ENCODE measurements at regions of chr15 and their contacts with region 1.

Region 1: GRCh38 chr15:60916679-60917460 is 312.2 kb downstream of the RORA start:
- DNase-seq: peak; percentile 89 to 97 (median 94)
- H3K4me3 ChIP-seq: peak overlapping the region in 1 of 4 donors; percentile 27
- H3K27ac ChIP-seq: peak overlapping the region; percentile 63 to 83 (median 68)
- H3K4me1 ChIP-seq: peaks cover 19 to 28% of the 10 kb centered on the region in 2 donors
- H3K27me3 ChIP-seq: no peaks in the 10 kb centered on the region
- CTCF ChIP-seq: peak; percentile 65 to 94 (median 90)
- POLR2A ChIP-seq: no peak

Region 2: DNA sequence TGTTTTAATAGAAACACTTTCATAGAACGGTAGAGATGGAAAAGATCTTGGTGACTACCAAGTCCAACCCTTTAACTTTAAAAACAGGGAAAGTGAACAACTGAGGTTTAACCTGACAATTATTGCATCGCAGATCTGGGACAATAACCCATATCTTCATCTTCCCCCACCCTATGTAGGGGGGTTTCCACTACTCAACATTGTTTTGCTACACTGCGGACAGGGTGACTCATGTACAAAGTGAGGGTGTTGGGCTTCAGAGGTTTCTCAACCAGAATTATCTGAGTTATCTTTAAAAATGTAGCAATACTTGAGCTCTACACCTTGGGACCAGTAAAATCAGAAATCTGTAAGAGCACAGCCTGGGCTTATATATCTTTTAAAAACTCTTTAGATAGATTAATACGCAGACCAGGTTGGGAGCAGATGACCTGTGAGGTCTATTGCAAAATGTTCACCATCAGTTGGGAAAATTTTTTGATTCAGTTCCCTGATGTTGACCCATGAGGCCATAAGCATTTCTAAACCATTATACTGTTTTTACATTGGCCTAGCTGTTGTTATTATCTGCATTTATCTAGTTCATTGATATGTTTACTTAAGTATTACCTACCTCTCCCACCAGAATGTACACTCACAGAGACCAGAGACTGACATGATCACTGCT is 334.4 kb before region 1 on chr15:
- intact Hi-C with region 1: loop called in 1 of 2 experiments (anchors 2 kb)
- DNase-seq: peak in 1 of 7 donors; percentile 50
- H3K4me3 ChIP-seq: no peak overlapping the region
- H3K27ac ChIP-seq: peak overlapping the region; percentile 3 to 79 (median 55)
- H3K4me1 ChIP-seq: peaks cover 40 to 81% of the 10 kb centered on the region in 2 donors
- H3K27me3 ChIP-seq: no peaks in the 10 kb centered on the region
- CTCF ChIP-seq: no peak
- POLR2A ChIP-seq: no peak

Region 3: DNA sequence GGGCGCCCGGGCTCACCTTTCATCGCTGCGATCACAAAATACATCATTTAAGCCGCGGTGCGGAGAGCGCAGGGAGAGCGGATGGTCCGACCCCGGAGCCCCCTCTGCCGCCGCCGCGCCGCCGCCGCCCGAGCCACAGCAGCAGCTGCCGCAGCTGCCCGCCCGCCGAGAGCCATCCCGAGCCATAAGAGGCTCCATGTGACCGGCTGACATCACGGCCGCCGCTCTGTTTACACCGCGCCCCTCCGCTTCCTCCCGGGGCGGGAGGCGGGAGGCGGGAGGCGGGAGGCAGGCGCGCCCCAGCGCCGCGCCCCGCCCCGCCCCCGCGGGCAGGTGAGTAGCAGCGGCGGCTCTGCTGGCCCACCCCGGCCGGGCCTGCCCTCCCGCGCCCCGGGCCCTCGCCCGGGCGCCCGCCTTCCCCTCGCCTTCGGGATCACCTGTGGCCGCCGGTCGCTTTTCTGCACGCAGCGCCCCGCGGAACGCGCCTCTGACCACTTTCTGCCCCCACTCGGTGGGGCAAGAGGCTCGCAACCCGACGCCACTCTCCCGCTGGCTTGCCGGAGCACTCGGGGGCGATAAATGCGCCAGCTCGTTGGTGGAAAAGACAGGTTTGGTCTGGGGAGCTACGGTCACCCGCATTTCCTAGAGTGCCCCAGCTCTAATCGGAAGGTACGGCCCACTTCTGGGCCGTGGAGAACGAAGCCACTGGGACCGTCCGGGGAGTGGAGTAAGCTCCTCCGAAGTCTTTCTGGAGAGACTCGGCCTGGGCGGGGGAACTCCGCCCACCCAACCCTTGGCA is 324.3 kb before region 1 on chr15:
- intact Hi-C with region 1: loop called in 1 of 2 experiments (anchors 10 kb)
- DNase-seq: peak; percentile 89 to 94 (median 92)
- H3K4me3 ChIP-seq: peak overlapping the region in 3 of 4 donors; percentile 67 to 99 (median 97)
- H3K27ac ChIP-seq: peak overlapping the region; percentile 85 to 99 (median 97)
- H3K4me1 ChIP-seq: peaks cover 15 to 23% of the 10 kb centered on the region in 2 donors
- H3K27me3 ChIP-seq: no peaks in the 10 kb centered on the region
- CTCF ChIP-seq: peak in 4 of 6 experiments; percentile 17 to 37 (median 24)
- POLR2A ChIP-seq: peak; percentile 87 to 96

Region 4: DNA sequence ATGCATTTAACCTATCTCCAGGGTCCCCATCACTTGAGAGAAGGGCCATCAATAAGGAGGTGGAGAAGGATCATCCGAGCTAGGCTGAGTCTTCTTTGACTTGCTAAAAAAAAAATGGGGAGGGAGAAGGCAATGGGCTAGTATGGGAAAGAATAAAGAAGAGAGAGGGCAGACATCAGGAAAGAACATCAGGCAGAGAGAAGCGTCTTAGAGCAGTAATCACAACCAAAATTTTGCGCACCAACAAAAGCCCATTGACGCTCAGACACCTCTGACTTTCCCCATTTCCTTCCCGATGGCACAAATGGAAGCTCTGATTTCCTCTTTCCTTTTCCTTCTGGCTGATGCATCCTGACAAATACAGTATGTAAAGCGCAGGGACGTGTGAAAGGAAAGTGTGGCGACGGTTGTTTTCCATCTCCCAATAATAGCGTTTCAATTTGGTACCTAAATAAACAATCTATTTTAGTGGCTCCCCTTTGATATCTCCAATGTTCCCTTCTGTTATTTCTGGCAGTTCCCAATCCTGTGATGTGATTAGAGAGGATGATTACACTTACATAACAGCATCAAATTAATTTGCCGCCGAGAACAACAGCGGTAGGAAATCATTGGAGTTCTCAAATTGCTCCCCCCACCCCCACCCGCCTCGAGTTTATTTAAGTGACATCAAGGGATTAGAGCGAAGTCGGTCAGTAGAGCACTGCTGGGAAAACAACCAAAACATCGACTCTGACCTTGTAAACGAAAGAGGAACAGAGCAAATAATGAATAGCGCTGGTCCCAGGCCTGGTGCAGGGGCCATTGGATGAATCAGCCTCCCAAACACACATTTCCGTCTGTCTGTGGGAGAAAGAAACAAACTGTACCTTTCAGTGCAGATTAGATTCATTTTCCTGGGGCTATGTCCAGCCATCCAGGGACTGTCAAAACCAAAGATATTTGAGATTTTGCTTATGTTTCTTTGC is 164.6 kb before region 1 on chr15:
- intact Hi-C with region 1: loop called in 1 of 2 experiments (anchors 10 kb)
- DNase-seq: peak; percentile 77 to 93 (median 88)
- H3K4me3 ChIP-seq: peak overlapping the region in 2 of 4 donors; percentile 6 to 37
- H3K27ac ChIP-seq: peak overlapping the region; percentile 2 to 87 (median 77)
- H3K4me1 ChIP-seq: peaks cover 12 to 24% of the 10 kb centered on the region in 2 donors
- H3K27me3 ChIP-seq: no peaks in the 10 kb centered on the region
- CTCF ChIP-seq: no peak
- POLR2A ChIP-seq: peak in 1 of 2 donors; percentile 32